ACHN (cell line): ENCODE measurements at regions of chr4 and their contacts with region 1.

Region 1: GRCh38 chr4:112231779-112232713 is at the start of gene AP1AR:
- DNase-seq: peak; percentile 81

Region 2: DNA sequence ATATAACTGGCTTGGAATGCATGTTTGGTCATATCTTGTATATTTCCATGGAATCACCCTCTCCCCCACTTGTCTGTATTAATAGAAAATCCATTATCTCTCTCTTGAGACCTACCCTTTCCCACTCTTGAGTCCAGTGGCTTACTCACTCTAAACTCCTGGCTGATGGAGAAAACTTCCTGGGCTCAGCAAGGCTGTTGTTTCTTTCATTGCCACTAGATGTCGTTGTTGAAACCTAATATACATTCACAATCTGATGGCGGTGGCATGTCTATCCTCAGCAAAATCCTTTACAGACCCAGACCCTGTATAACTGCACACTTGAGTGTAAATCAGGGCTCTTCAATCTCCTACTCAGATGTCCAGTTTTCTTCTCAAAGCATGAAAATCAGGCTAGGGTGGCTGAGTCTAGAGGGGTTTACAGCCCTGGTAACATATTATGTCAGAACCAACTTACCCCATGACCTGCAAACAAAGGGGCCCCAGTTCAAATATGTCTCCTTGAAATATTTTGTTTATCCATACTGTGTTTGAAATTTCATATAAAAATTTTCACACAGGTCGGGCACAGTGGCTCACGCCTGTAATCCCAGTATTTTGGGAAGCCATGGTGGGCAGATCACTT is 156.8 kb before region 1 on chr4:
- in situ Hi-C with region 1: loop called (anchors 25 kb)
- DNase-seq: peak; percentile 64

Region 3: DNA sequence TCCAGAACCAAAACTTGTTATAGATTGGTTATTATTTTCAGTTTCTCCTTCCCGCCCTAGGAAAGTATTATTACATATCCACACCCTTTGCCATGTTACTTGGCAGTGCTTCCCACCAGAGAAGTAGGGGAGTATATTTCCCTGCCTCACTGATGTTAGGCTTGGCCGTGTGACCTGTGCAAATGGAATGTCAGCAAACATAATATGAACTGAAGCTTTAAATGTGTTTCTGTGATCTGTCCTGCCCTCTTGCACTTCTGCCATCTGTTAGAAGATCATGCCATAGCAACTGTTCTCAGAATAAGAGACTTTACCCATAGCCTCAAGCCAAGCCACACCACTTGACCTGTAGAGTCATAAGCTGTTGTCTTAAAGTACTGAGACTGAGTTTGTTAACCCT is 320.6 kb after region 1 on chr4:
- in situ Hi-C with region 1: no loop called
- DNase-seq: peak; percentile 81